RWPE1 (cell line): ENCODE measurements at regions of chr5 and their contacts with region 1.

Region 1: DNA sequence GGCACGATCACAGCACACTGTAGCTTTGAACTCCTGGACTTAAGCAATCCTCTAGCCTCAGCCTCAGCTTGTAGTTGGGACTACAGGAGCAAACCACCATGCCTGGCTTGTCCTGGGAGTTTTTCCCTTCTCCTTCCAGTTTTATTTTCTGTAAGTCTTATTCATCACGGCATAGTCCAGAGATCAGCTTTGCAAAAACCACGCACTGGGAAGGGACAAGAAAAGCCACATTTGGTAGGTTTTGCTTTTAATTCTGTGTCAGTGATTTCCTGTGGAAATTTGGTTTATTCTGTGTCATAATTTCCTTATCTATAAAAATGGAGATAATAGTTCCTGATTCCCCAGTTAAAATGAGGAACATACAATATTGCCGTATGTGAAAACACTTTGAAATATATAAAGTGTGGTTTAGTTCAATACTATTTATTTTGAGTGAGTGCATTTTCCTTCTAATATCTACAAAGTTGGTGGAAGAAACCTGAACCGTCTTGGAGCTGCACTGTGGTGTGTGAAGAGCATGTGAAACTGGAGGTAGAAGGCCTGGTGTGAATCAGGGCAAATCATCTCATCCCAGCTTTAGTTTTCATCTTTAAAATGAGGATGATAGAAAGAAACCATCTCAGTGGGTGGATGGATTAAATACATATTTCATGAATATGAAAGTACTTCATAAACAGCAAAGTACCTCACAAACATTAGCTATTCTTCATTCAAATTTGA is 92.8 kb upstream of the ELL2 start:
- DNase-seq: no peak
- H3K27ac ChIP-seq: no peak overlapping the region
- CTCF ChIP-seq: no peak

Region 2: DNA sequence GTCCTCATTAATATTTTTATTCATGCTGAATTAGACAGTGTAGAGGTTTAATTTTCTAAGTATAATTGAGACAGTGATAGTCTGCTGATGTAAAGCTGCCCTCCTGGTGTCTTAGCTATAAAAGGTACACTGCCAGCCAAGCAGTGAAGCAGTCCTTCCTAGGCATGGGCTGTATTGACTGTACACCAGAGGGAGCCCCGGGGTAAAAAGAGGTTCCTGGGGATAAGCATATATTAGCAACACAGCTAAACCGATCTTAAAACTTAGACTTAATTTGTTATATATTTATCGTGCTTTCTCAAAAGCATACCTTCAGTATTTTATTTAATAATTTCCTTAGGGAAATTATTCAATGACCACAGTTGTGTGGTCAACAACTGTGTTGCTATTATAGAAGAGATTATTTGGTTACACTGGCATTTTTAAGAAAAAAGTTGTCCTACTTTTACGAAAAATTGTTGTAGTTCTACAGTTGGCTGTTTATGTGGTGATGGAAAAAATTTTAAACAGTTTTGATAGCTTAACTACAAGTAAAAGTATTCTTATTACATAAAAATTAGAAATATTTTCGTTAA is 161.6 kb before region 1 on chr5:
- CTCF ChIA-PET with region 1: no interaction called
- POLR2A ChIA-PET with region 1: no interaction called
- DNase-seq: peak; percentile 60
- H3K27ac ChIP-seq: no peak overlapping the region
- CTCF ChIP-seq: peak; percentile 49

Region 3: GRCh38 chr5:96065577-96066385 is 11.3 kb after region 1 on chr5:
- CTCF ChIA-PET with region 1: interaction called, 12 read pairs
- POLR2A ChIA-PET with region 1: no interaction called
- DNase-seq: no peak
- H3K27ac ChIP-seq: no peak overlapping the region
- CTCF ChIP-seq: no peak

Region 4: GRCh38 chr5:96113170-96113939 is 58.9 kb after region 1 on chr5:
- CTCF ChIA-PET with region 1: no interaction called
- POLR2A ChIA-PET with region 1: no interaction called
- DNase-seq: peak; percentile 94
- H3K27ac ChIP-seq: peak overlapping the region; percentile 83
- CTCF ChIP-seq: no peak